ENCODE measurements at regions of chr6 and their contacts with region 1.

Region 1: GRCh38 chr6:32570363-32570905 is 19.2 kb downstream of the HLA-DRB1 start:
- DNase-seq: no peak
- ATAC-seq: no peak
- H3K4me3 ChIP-seq: no peak overlapping the region
- H3K27ac ChIP-seq: no peak overlapping the region
- H3K4me1 ChIP-seq: no peaks in the 10 kb centered on the region
- H3K27me3 ChIP-seq: peaks cover 8% of the 10 kb centered on the region; the same call in 1 of the 2 replicates
- CTCF ChIP-seq: no peak

Region 2: GRCh38 chr6:32529697-32530429 is 40.6 kb before region 1 on chr6 and contains the start of gene HLA-DRB5:
- CTCF ChIA-PET with region 1: no interaction called
- POLR2A ChIA-PET with region 1: no interaction called
- intact Hi-C with region 1: loop called (anchors 5 kb)
- DNase-seq: no peak
- ATAC-seq: no peak
- H3K4me3 ChIP-seq: no peak within 1 kb of the TSS
- H3K27ac ChIP-seq: no peak within 1 kb of the TSS
- H3K4me1 ChIP-seq: no peaks in the 10 kb centered on the region
- H3K27me3 ChIP-seq: no peaks in the 10 kb centered on the region
- CTCF ChIP-seq: no peak
- total RNA-seq, gene HLA-DRB5: not detected in 2 replicates

Region 3: DNA sequence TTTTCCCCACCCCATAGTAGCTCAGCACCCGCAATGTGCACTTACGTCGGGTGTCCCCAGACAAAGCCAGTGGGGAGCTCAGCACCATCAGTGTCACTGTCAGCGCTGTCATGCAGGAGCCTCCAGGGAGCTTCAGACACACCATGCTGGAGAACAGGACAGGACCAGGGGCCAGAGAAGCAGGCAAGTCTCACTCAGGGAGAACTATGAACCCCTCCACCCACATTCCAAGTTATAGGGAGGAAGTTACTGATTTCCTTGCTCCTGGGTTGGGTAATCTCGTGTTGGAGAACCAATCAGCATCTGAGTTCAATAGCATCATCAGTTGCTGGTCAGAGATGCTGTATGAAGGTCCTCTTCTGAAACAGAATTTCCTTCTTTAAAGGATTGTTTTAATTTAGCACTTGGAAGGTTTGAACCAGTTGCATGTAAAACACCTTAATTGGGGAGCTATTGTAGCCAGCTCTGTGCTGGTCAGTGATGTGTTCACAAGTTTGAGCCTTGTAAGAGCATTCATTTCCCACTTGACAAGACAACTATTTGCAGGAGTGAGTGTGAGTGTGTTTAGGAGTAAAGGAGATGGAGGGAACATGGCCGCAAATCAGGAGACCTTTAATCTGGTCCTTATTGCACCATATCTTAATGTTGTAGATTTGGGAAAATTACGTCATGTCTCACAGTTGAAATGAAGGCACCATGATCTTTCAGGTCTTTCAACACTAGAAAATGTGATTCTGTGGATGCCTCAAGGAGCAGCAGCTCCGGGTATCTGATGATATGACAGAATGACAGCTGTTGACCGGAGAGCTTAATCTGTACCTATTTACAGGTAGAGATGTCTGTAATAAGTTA is 19.4 kb after region 1 on chr6 and contains the start of gene HLA-DRB1:
- CTCF ChIA-PET with region 1: no interaction called
- POLR2A ChIA-PET with region 1: no interaction called
- intact Hi-C with region 1: no loop called
- DNase-seq: peak; percentile 25
- ATAC-seq: peak; percentile 82; the same call in 1 of the 2 replicates
- H3K4me3 ChIP-seq: no peak within 1 kb of the TSS
- H3K27ac ChIP-seq: no peak within 1 kb of the TSS
- H3K4me1 ChIP-seq: no peaks in the 10 kb centered on the region
- H3K27me3 ChIP-seq: no peaks in the 10 kb centered on the region
- CTCF ChIP-seq: no peak
- total RNA-seq, gene HLA-DRB1: not detected in 2 replicates

Region 4: DNA sequence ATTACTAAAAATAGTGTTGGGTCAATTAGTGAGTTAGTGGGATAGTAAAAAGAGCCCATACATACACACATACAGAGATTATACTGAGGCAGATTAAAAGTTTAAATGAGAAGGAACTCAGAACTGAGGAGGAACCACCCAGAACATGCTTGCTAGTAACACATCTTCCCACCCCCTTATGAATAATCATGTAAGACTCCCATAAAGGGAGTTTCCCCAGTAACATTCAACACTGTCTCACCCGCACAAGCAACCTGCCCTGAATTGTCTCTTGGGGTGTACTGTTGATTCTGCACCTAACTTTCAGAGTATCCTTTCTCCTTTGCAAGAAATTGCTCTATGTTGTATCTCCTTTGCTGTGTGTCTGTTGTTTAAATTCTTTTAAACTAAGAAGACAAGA is 204.0 kb after region 1 on chr6:
- CTCF ChIA-PET with region 1: no interaction called
- POLR2A ChIA-PET with region 1: no interaction called
- intact Hi-C with region 1: no loop called
- DNase-seq: no peak
- ATAC-seq: no peak
- H3K4me3 ChIP-seq: no peak overlapping the region
- H3K27ac ChIP-seq: no peak overlapping the region
- H3K4me1 ChIP-seq: no peaks in the 10 kb centered on the region
- H3K27me3 ChIP-seq: peaks cover 66% of the 10 kb centered on the region
- CTCF ChIP-seq: no peak

Region 5: GRCh38 chr6:33235221-33235634 is 664.8 kb after region 1 on chr6:
- CTCF ChIA-PET with region 1: no interaction called
- POLR2A ChIA-PET with region 1: no interaction called
- intact Hi-C with region 1: no loop called
- DNase-seq: no peak
- ATAC-seq: no peak
- H3K4me3 ChIP-seq: no peak overlapping the region
- H3K27ac ChIP-seq: no peak overlapping the region
- H3K4me1 ChIP-seq: no peaks in the 10 kb centered on the region
- H3K27me3 ChIP-seq: peaks cover 43% of the 10 kb centered on the region
- CTCF ChIP-seq: no peak